ENCODE measurements at regions of chr4 and their contacts with region 1.

Region 1: DNA sequence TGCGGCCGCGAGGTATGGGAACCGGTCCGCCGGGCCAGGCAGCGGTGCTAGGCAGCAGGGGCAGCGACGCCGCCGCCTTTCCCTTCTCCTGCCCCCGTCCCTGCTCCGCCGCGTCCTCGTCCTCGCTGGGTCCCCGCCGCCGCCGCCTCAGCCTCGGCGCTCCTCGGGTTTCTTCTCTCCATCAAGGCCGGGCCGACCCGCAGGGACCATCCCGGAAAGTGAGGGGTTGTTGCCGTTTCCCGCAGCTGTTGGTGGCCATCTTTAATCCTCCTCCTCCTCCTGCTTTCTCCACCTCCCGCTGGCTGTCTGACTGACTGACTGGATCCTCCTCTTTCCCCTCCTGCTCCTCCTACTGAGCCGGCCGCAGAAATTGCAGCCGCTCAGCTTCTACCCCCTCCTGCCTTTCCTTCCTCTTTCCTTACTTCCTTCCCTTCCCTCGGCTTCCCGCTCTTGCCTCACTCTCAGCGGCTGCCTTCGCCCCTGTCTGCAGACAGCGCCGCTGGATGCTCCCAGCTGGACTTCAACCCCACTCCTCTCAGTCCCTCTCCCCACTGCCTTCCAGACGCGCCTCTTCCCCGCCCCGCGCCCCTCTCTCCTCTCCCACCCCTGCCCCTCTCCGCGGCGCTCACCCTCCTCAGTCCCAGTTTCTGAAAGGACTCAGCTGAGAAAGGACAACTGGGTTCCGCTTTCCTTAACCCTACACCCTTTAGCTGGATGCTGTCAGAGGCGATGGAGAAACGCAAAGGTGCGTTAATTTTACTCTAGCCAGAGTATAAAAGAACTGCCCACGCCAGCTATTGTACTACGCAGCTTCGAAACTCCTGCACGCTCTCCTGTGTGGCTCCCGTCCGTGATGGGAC is at the start of gene WDFY3:
- DNase-seq: peak; percentile 69
- CTCF ChIP-seq: no peak

Region 2: GRCh38 chr4:84035568-84035967 is 931.0 kb before region 1 on chr4:
- in situ Hi-C with region 1: no loop called
- DNase-seq: no peak
- CTCF ChIP-seq: no peak

Region 3: DNA sequence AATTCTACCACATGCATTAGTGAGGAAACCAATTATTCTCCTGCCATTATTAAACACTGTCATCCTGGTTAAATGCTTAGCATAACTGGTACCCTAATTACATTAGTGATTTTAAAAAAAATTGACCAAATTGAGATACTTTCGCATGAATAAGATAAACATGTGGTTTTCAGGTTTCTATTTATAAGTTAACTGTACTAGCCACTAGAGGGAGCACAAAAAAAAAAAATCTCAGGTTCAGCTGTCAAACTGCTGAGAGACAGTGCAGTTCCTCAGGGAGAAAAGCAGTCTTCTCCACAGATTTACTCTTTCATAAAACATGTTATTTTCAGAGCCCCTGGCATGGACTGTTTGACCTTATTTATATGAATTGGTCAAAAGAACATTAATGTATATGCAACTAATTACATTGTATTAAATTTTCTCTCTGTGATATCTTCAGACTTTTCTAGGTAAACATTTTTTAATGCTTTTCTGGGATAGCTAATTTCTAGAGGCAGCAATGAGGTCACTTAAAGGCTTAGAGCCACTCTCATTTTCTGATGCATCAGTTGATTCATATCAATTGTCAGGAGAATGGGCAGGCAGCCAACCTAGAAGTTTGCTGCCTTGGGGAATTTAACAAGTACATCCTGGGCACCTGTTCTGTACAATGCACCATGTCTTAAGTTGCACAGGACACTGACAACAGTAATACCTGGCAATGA is 216.2 kb before region 1 on chr4:
- in situ Hi-C with region 1: loop called (anchors 25 kb)
- DNase-seq: peak; percentile 27
- CTCF ChIP-seq: peak; percentile 53